Heart left ventricle (tissue), 16 donors: ENCODE measurements at regions of chr15 and their contacts with region 1.

Region 1: GRCh38 chr15:75903331-75904239 is at the start of gene FBXO22:
- DNase-seq: peak; percentile 91 to 94 (median 93)
- ATAC-seq: peak; percentile 98 to 100 (median 99)
- H3K4me3 ChIP-seq: peak within 1 kb of the TSS; percentile 65 to 97 (median 86)
- H3K27ac ChIP-seq: peak within 1 kb of the TSS in 11 of 12 donors; percentile 60 to 91 (median 81)
- H3K4me1 ChIP-seq: peaks cover 0 to 39% (median 17%) of the 10 kb centered on the region in 12 donors
- H3K27me3 ChIP-seq: no peaks in the 10 kb centered on the region
- CTCF ChIP-seq: peak in 1 of 12 donors; percentile 15
- POLR2A ChIP-seq: peak in 1 of 2 donors; percentile 68
- total RNA-seq, gene FBXO22: 6.8 to 24.9 (median 19.7) TPM

Region 2: GRCh38 chr15:75738647-75739331 is 164.8 kb before region 1 on chr15:
- intact Hi-C with region 1: loop called in 1 of 10 experiments (anchors 10 kb)
- DNase-seq: peak; percentile 92 to 96 (median 93)
- ATAC-seq: peak; percentile 92 to 99 (median 98)
- H3K4me3 ChIP-seq: peak overlapping the region; percentile 53 to 86 (median 77)
- H3K27ac ChIP-seq: peak overlapping the region in 4 of 12 donors; percentile 37 to 55 (median 50)
- H3K4me1 ChIP-seq: peaks cover 0 to 27% (median 12%) of the 10 kb centered on the region in 12 donors
- H3K27me3 ChIP-seq: no peaks in the 10 kb centered on the region
- CTCF ChIP-seq: peak in 1 of 12 donors; percentile 3
- POLR2A ChIP-seq: no peak

Region 3: GRCh38 chr15:75809986-75810750 is 93.4 kb before region 1 on chr15:
- intact Hi-C with region 1: loop called in 2 of 10 experiments (anchors 10 kb)
- DNase-seq: no peak
- ATAC-seq: peak in 2 of 4 donors; percentile 61 to 65
- H3K4me3 ChIP-seq: no peak overlapping the region
- H3K27ac ChIP-seq: no peak overlapping the region
- H3K4me1 ChIP-seq: no peaks in the 10 kb centered on the region
- H3K27me3 ChIP-seq: no peaks in the 10 kb centered on the region
- CTCF ChIP-seq: peak in 10 of 12 donors; percentile 14 to 53 (median 32)
- POLR2A ChIP-seq: no peak

Region 4: DNA sequence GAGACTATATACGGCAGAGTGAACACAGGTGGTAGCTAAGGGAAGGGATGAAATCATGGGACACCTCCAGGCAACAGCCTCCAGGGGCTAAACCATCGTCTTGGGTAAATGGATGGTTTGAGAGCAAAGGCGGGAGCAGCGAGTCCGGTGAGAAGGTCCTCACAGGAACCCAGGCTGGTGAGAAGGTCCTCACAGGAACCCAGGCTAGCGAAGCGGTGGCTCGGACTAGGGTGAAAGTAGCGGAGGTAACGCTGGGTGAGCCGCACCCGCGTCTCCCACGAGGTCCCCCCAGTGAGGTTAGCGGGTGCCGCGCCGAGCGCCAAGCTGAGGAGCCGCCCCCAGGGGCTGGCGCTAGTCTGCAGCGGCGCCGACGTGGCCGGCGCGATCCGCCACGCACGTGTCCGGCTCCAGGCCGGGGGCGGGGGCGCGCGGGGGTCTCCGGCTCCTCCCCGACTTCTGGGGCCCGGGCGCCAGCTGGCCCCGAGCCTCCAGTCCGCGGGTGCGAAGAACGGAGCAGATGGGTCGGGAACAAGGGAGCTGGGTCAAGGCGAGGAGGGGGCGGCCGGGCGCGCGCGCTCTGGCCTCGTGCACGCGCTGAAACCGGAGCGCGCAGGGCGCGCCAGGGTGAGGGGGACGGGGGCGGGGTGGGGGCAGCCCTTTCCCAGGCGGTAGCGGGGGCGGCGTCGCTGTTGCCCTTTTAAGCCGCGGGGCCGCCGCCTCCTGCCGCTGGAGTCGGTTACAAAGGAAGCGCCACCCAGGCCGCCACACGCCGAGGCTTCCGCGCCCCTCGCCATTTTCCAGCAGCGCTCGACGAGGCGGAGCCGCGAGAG is 60.6 kb before region 1 on chr15 and contains the start of gene UBE2Q2:
- intact Hi-C with region 1: loop called in 6 of 10 experiments (anchors 2 to 10 kb)
- DNase-seq: peak; percentile 80 to 90 (median 86)
- ATAC-seq: peak; percentile 18 to 80 (median 71)
- H3K4me3 ChIP-seq: peak within 1 kb of the TSS; percentile 66 to 98 (median 94)
- H3K27ac ChIP-seq: peak within 1 kb of the TSS; percentile 87 to 97 (median 94)
- H3K4me1 ChIP-seq: peaks cover 0 to 51% (median 34%) of the 10 kb centered on the region in 12 donors
- H3K27me3 ChIP-seq: no peaks in the 10 kb centered on the region
- CTCF ChIP-seq: no peak
- POLR2A ChIP-seq: no peak
- total RNA-seq, gene UBE2Q2: 22.8 to 39.4 (median 28.5) TPM

Region 5: DNA sequence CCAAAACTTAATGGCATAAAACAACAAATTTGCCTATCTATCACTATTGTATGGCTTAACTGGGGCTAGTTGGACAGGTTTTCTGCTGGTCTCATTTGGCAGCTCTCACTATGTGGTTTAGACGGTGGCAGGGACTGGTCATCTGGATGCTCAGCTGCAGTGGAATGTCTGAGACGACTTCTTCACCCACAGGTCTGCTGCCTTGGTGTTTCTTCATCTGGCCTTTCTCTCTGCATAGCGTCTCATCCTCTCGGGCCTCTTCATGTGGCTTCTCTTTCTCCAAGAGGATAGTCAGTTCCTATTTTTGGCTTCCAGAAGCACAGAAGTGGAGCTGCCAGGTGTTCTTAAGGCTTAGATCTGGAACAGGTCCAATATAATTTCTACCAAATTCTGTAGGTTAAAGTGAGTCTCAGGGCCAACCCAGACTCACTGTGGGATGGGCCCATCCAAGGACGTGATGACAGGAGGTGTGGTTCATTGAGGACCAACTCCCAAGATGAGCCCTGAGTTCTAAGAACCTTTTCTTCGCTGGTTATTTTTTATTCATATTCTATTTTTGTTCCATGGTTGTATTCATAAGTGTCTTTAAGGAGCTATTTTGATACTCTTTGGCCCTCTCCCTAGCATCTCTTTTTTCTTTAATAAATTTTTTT is 41.7 kb before region 1 on chr15:
- intact Hi-C with region 1: loop called in 1 of 10 experiments (anchors 2 kb)
- DNase-seq: no peak
- ATAC-seq: no peak
- H3K4me3 ChIP-seq: no peak overlapping the region
- H3K27ac ChIP-seq: no peak overlapping the region
- H3K4me1 ChIP-seq: peaks cover 0 to 28% (median 11%) of the 10 kb centered on the region in 12 donors
- H3K27me3 ChIP-seq: no peaks in the 10 kb centered on the region
- CTCF ChIP-seq: no peak
- POLR2A ChIP-seq: no peak

Region 6: GRCh38 chr15:75928680-75929608 is 25.4 kb after region 1 on chr15:
- intact Hi-C with region 1: no loop called
- DNase-seq: no peak
- ATAC-seq: no peak
- H3K4me3 ChIP-seq: no peak overlapping the region
- H3K27ac ChIP-seq: no peak overlapping the region
- H3K4me1 ChIP-seq: peaks cover 0 to 25% (median 8%) of the 10 kb centered on the region in 12 donors
- H3K27me3 ChIP-seq: no peaks in the 10 kb centered on the region
- CTCF ChIP-seq: no peak
- POLR2A ChIP-seq: no peak